Right ventricle myocardium inferior (tissue), 1 donor: ENCODE measurements at regions of chr1 and their contacts with region 1.

Region 1: DNA sequence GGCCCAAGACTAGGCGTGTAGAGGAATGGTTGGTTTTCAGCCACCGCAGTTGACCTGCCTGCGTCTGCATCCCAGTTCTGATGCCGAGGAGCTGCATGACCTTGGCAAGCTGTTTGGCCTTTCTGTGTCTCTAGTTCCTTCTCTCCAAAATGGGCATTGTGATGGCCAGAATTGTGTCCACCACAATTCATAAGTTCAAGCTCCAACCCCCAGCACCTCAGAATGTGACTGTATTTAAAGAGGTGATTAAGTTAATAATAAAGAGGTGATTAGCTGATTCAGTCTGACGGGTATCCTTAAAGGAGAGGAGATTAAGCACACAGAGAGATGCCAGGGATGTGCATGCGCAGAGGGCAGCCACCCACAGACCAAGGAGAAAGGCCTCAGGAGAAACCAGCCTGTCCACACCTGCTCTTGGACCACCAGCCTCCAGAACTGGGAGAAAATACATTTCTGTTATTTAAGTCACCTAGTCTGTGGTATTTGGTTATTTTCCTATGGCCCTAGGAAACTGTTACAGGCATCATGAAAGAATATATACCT is 28.5 kb downstream of the MAB21L3 start:
- DNase-seq: peak; percentile 30
- ATAC-seq: peak; percentile 6

Region 2: DNA sequence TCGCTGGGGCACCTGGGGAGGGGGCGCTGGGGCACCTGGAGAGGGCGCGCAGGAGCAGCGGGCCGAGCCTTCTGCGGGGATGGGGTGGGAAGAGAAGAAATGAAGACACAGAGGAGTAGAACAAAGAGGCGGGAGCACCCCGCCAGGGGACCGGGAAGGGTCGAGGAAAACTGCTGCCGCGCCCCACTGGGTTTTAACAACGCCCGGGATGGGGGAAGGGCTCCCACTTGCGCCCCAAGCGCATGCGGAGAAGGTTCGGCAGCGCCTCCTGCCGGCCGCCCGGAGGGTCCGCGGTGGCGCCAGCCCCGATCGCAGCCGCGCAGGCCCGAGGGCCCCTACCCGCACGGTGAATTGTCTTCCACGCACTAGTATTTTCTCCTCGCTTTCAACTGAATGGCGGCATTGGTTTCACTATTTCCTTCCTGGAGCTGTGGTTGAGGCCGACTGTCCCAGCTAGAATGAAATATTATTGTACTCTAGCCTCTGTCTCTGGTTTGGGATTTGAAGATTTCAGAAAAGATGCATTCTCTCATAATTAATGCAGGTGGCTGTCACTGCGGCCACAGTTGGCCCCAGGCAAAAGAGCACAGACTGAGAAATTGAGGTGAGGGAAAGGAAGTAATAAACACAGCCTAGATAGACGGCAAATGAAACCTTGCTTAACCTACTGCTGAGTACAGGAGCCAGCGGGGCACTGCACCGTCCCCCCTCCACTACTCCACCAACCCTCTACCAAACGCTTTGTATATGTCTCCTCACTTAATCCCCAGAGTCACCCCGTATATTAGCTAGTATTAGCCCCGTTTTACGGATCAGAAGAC is 28.8 kb after region 1 on chr1:
- intact Hi-C with region 1: loop called (anchors 1 kb)
- DNase-seq: peak; percentile 89
- ATAC-seq: peak; percentile 61

Region 3: GRCh38 chr1:116372587-116373444 is 233.2 kb after region 1 on chr1 and contains the start of gene ATP1A1:
- intact Hi-C with region 1: loop called (anchors 5 kb)
- DNase-seq: peak; percentile 99
- ATAC-seq: peak; percentile 87
- total RNA-seq, gene ATP1A1: 298 TPM

Region 4: DNA sequence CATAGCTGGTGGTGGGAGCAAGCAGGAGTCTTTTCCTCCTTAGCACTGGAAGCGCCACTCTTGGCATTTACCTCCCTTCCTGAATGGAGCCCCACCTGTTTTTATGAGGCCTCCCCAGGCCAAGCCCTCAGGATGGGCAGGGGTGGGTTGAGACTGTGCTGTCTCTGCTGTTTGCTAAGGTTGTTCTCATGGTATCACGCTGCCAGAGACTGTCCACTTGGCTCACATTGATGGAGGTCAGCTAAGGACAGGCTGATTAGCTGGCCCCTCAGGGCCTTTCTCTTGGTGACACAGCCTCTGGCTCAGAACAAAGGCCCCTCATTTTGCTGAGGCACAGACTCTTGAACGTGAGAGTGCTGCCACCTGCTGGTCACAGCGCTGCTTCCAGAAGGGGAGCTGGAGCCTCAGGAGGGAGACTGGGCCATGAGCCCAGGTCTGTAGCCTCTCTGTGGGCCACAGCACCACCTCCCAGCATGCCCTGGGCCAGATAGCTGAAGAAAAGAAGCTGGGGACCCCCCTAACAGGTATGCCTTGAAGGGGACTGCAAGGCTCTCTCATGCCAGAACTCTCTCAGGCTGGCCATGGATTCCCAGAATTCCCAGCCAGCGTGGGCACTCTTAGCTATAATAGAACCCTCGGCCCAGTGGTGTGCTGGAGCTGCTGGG is 345.5 kb after region 1 on chr1:
- intact Hi-C with region 1: loop called (anchors 1 kb)
- DNase-seq: peak; percentile 93
- ATAC-seq: peak; percentile 85

Region 5: DNA sequence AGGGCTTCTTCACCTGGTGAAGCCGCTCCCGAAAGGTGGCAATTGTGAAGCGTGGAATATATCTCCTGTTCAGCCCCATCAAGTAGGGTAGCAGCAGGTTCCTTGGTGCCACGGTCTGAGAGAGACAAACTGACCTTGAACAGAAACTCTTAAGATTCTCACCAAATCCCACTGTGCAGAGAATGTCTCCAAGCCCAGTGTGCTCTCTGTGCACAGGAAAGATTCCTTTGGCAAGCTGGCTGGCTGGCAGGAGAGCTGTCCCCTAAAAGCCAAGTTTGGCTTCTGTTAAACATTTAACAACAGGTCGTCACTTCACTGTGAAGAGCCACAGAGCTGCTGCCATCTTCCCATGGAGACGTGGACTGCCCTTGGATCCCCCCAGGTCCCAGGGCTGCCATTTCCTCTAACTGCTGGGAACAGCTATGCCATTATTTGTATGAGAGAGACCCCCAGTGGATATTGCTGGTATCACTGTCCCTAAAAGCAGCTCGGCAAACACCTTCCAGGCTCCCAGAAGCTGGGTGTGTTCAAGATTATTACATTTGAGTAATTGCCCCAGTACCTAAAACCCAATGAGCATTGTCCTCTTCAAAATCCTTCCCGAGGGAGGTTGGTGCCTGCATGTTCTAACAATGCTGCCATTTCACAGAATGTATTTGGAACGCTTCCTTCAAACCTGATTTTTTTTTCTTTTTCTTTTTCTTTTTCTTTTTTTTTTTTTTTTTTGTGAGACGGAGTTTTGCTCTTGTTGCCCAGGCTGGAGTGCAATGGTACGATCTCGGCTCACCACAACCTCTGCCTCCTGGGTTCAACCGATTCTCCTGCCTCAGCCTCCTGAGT is 359.3 kb after region 1 on chr1:
- intact Hi-C with region 1: loop called (anchors 1 kb)
- DNase-seq: peak; percentile 76
- ATAC-seq: peak; percentile 76